Activated CD8-positive, alpha-beta T cell treated with anti-CD3 and anti-CD28 coated beads for 36 hours (primary cell): ENCODE measurements at regions of chr10 and their contacts with region 1.

Region 1: DNA sequence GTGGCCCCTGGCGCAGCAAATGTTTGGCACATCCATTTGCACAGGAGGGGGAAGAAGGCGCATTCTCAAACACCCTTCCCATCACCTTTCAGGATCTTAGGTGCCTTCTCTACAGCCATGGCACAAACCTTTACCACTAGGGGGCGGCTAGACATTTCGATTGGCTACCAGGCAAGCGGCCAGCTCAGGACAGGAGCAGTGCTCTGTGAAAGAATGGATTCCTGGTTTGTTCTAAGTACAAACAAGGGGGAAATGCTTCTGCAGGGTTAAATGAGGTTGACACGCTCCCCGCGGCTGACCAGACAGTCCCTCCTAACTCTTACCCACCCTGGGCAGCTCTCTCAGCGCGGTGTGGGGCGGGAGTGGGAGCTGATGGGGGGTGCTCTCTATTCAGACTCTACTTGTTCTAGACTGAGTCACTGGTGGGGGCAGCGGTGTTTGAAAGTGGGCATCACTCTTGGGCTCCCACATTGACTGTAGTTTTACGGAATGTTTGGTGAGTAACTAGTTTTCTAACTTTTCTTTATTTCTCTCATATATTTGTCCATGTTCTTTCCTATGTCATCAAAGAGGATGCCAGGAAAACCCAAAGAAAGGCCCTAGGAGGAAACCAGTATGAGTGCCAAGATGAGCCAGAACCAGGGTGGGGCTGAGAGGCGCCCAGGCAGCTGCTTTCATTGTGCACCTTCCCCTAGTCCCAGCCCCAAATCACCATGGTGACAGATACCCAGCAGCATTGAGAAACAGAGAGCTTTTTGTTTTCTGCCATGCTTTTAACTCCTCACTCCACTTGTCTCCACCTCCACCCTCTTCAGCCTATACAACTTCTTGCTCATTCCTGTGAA is 61.4 kb upstream of the GPR158 start:
- DNase-seq: peak; percentile 70
- ATAC-seq: peak; percentile 56
- H3K4me3 Mint-ChIP-seq: no peak overlapping the region
- H3K27ac Mint-ChIP-seq: no peak overlapping the region
- H3K4me1 Mint-ChIP-seq: no peaks in the 10 kb centered on the region
- H3K27me3 Mint-ChIP-seq: peaks cover 39% of the 10 kb centered on the region
- CTCF ChIP-seq: peak; percentile 72

Region 2: DNA sequence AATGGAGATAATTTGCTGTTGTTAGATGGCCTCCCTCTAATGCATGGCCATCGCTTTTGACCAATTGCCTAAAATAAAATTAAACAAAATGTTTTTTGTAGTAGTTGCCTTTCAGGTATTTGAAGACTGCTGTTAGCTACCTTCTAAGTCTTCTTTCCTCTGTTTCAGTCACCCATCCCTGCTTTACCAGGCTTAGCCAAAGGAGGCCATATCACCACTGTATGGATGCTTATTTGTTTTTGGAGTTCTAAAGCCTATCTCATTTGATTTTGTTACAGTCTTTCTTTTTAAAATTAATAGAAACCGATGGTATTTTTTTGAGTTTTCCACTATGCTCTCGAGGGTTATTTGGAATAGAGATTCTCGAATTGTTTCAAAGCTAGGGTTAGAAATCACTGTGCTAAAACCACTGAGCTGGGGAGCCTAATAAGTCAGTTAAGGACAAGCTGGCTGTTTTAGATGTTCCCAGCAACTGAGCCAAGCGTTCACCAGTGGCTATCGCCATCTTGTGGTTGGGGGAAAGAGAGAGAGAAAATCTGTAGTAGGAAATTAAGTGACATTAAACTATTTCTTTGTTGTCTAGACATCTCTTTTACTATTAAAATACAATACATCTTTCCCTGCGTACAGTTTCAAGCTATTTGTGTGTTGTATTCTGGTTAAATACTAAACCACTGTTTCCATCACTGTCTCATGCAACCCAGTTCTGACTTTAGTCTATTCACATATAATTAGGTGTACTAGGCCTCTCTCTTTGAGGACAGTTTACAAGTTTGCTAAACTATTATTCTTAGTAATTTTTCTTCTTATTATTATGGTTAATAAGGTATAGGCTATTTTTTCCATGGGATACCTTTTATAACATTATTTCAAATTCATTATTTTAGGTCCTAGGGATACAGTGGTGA is 113.6 kb after region 1 on chr10:
- CTCF ChIA-PET with region 1: interaction called, 12 read pairs
- POLR2A ChIA-PET with region 1: no interaction called
- intact Hi-C with region 1: loop called (anchors 5 kb)
- DNase-seq: peak; percentile 22
- ATAC-seq: no peak
- H3K4me3 Mint-ChIP-seq: no peak overlapping the region
- H3K27ac Mint-ChIP-seq: no peak overlapping the region
- H3K4me1 Mint-ChIP-seq: no peaks in the 10 kb centered on the region
- H3K27me3 Mint-ChIP-seq: peaks cover 4% of the 10 kb centered on the region
- CTCF ChIP-seq: peak; percentile 59

Region 3: DNA sequence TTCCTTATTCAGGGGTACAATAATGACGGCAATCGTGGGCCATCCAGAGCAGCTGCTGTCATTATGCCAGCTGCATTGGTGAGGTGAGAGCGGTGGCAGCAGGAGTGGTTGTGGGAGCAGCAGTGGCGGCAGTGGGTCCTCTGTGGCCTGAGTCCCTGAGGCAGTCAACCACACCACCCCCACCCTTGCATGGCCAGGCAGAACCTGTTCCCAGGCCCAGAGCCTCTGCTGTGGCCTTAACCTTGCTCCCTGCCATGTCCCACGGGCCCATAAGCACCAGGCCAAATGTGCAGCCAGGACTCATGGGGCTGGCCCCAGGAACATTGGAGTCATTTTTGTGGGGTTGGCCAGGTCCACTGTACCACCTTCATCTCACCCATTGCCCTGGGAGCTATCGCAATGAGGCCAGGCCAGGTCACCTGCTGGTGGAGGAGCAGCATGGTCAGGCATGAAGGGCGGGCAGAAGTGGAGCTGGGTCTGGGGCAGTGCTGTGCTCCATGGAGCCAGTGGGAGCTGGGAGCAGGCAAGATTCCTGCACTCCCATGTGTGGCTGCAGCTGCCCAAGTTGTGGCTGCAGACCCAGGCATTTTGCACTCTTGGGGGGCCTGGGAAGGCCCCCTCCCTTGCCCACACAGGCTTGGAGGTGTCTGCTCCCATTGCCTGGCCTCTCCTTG is 274.9 kb after region 1 on chr10:
- CTCF ChIA-PET with region 1: no interaction called
- POLR2A ChIA-PET with region 1: no interaction called
- intact Hi-C with region 1: no loop called
- DNase-seq: no peak
- ATAC-seq: no peak
- H3K4me3 Mint-ChIP-seq: no peak overlapping the region
- H3K27ac Mint-ChIP-seq: no peak overlapping the region
- H3K4me1 Mint-ChIP-seq: no peaks in the 10 kb centered on the region
- H3K27me3 Mint-ChIP-seq: no peaks in the 10 kb centered on the region
- CTCF ChIP-seq: no peak